ENCODE measurements at regions of chr1 and their contacts with region 1.

Region 1: DNA sequence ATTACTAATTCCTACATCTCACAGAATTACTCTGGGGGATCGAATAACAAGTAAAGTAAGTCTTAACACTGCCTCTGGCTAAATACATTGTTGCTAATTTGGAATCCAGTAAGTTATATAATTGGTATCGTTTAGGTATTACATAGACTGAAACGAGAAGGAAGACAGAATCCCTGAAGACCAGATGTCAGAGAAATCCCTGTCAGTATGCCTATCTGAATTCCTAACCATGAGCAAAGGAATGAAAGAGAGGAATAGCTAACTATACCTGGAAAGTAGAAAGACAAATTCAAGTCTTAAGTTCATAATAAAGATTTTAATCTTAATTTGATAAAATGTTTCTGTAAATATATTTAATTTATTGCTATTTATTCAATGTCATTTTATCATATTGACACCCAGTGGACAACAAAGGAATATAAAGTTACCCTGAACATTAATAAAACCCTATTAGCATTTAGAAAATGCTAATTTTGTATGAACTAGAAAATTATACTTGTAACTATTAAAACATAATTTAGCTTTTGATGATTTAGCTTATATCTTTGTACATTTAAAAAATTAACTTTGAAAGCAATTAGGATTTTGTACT is 11.4 kb downstream of the DEPDC1 start:
- DNase-seq: no peak
- H3K4me3 ChIP-seq: no peak overlapping the region
- H3K27me3 ChIP-seq: no peaks in the 10 kb centered on the region
- CTCF ChIP-seq: no peak

Region 2: GRCh38 chr1:68496680-68497357 is 11.3 kb after region 1 on chr1 and contains the start of gene DEPDC1:
- CTCF ChIA-PET with region 1: interaction called, 11 read pairs
- POLR2A ChIA-PET with region 1: no interaction called
- DNase-seq: peak; percentile 55
- H3K4me3 ChIP-seq: peak within 1 kb of the TSS; percentile 92
- H3K27me3 ChIP-seq: no peaks in the 10 kb centered on the region
- CTCF ChIP-seq: peak; percentile 3; the same call in 1 of the 2 replicates
- polyA plus RNA-seq, gene DEPDC1: 5.3 and 10.3 TPM in 2 replicates

Region 3: GRCh38 chr1:68551459-68551858 is 65.9 kb after region 1 on chr1:
- CTCF ChIA-PET with region 1: no interaction called
- POLR2A ChIA-PET with region 1: no interaction called
- DNase-seq: no peak
- H3K4me3 ChIP-seq: no peak overlapping the region
- H3K27me3 ChIP-seq: no peaks in the 10 kb centered on the region
- CTCF ChIP-seq: no peak

Region 4: GRCh38 chr1:68600049-68600661 is 114.6 kb after region 1 on chr1:
- CTCF ChIA-PET with region 1: no interaction called
- POLR2A ChIA-PET with region 1: no interaction called
- DNase-seq: no peak
- H3K4me3 ChIP-seq: no peak overlapping the region
- H3K27me3 ChIP-seq: no peaks in the 10 kb centered on the region
- CTCF ChIP-seq: peak; percentile 57